Activated CD4-positive, alpha-beta memory T cell treated with anti-CD3 and anti-CD28 coated beads for 36 hours (primary cell): ENCODE measurements at regions of chr3 and their contacts with region 1.

Region 1: DNA sequence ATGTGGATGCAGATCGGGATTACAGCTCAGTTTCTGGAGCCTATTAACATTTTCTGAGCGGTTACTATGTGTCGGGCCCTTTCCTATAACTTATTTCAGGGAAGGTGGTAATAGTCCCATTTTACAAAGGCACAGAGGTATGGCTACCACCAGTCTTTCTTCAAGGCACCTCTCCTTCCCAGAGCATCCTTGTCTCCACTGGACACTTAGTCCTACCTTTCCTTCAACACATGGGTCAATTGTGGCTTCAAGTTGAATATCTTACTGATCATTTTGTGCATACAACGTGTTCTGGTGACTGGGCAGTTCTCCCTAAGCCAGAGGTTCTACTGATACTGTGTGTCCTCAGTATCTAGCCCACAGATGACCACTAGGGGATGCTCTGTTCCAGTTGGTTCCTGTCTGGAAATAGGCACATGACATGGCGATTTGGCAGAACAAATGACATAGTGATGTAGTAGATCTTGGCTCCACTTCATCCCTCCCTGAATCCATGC is 60.7 kb upstream of the CMTM8 start:
- DNase-seq: peak; percentile 73
- H3K4me3 Mint-ChIP-seq: peak overlapping the region; percentile 25
- H3K27ac Mint-ChIP-seq: no peak overlapping the region
- H3K4me1 Mint-ChIP-seq: peaks cover 12% of the 10 kb centered on the region
- H3K27me3 Mint-ChIP-seq: no peaks in the 10 kb centered on the region

Region 2: GRCh38 chr3:32018757-32019564 is 158.8 kb before region 1 on chr3:
- CTCF ChIA-PET with region 1: interaction called, 16 read pairs
- POLR2A ChIA-PET with region 1: no interaction called
- intact Hi-C with region 1: no loop called
- DNase-seq: no peak
- H3K4me3 Mint-ChIP-seq: no peak overlapping the region
- H3K27ac Mint-ChIP-seq: no peak overlapping the region
- H3K4me1 Mint-ChIP-seq: no peaks in the 10 kb centered on the region
- H3K27me3 Mint-ChIP-seq: no peaks in the 10 kb centered on the region

Region 3: DNA sequence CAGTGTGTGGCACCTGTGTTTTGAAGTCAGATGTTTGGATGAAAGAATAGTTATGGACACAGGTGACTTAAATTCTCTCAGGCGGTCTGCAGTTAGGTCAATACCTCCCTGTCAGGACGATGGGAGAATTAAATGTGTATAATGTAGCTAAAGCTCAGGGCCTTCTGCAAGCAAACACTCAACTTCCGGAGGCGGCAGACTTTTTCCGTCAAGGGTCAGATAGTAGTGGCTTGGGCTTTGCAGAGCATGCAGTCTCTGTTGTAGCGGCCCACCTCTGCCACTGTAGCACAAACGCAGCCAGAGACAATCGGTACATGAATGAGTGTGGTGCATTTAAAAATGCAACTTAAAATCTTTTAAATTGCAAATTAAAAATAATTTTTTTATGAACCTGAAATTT is 108.1 kb after region 1 on chr3:
- CTCF ChIA-PET with region 1: interaction called, 17 read pairs
- POLR2A ChIA-PET with region 1: no interaction called
- intact Hi-C with region 1: loop called (anchors 1 kb)
- DNase-seq: peak; percentile 45
- H3K4me3 Mint-ChIP-seq: no peak overlapping the region
- H3K27ac Mint-ChIP-seq: peak overlapping the region; percentile 69
- H3K4me1 Mint-ChIP-seq: peaks cover 48% of the 10 kb centered on the region
- H3K27me3 Mint-ChIP-seq: no peaks in the 10 kb centered on the region

Region 4: GRCh38 chr3:32302601-32303398 is 125.0 kb after region 1 on chr3:
- CTCF ChIA-PET with region 1: interaction called, 32 read pairs
- POLR2A ChIA-PET with region 1: no interaction called
- intact Hi-C with region 1: loop called (anchors 2 kb)
- DNase-seq: no peak
- H3K4me3 Mint-ChIP-seq: peak overlapping the region; percentile 60
- H3K27ac Mint-ChIP-seq: peak overlapping the region; percentile 86
- H3K4me1 Mint-ChIP-seq: peaks cover 66% of the 10 kb centered on the region
- H3K27me3 Mint-ChIP-seq: no peaks in the 10 kb centered on the region

Region 5: DNA sequence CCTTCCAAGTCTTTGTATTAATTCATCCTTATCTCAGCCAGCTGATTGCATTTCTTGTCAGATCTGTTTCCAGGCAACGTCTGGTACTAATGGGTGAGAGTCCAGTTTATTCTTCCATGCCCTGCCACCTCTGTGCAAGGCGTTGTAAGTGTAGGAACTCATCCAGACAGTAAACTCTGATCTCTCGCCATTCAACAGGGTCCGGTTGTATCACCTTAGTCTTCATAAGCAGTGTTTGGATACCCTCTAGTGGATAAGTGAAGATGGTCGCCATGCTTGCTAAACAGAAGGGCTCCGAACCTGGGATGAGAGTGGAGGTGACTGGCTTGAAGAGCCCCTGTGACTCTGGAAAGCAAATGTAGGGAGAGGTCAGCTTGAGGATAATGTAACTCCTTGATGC is 162.3 kb after region 1 on chr3:
- CTCF ChIA-PET with region 1: interaction called, 56 read pairs
- POLR2A ChIA-PET with region 1: interaction called, 3 read pairs
- intact Hi-C with region 1: loop called (anchors 1 kb)
- DNase-seq: peak; percentile 29
- H3K4me3 Mint-ChIP-seq: no peak overlapping the region
- H3K27ac Mint-ChIP-seq: no peak overlapping the region
- H3K4me1 Mint-ChIP-seq: peaks cover 24% of the 10 kb centered on the region
- H3K27me3 Mint-ChIP-seq: no peaks in the 10 kb centered on the region

Region 6: GRCh38 chr3:32502118-32502945 is 324.6 kb after region 1 on chr3 and contains the start of gene CMTM6:
- CTCF ChIA-PET with region 1: interaction called, 5 read pairs
- POLR2A ChIA-PET with region 1: no interaction called
- intact Hi-C with region 1: loop called (anchors 2 kb)
- DNase-seq: peak; percentile 84
- H3K4me3 Mint-ChIP-seq: peak within 1 kb of the TSS; percentile 100
- H3K27ac Mint-ChIP-seq: peak within 1 kb of the TSS; percentile 97
- H3K4me1 Mint-ChIP-seq: peaks cover 32% of the 10 kb centered on the region
- H3K27me3 Mint-ChIP-seq: no peaks in the 10 kb centered on the region
- total RNA-seq, gene CMTM6: 87.7 to 89.1 TPM